ENCODE measurements at regions of chr3 and their contacts with region 1.

Region 1: GRCh38 chr3:45145681-45146614 is at the start of gene CDCP1:
- DNase-seq: peak; percentile 43 to 78
- H3K4me3 ChIP-seq: peak within 1 kb of the TSS; percentile 83
- H3K27ac ChIP-seq: peak within 1 kb of the TSS; percentile 85
- H3K4me1 ChIP-seq: peaks cover 34% of the 10 kb centered on the region
- H3K27me3 ChIP-seq: no peaks in the 10 kb centered on the region
- CTCF ChIP-seq: no peak
- total RNA-seq, gene CDCP1: 75.7 and 85.0 TPM in 2 replicates

Region 2: DNA sequence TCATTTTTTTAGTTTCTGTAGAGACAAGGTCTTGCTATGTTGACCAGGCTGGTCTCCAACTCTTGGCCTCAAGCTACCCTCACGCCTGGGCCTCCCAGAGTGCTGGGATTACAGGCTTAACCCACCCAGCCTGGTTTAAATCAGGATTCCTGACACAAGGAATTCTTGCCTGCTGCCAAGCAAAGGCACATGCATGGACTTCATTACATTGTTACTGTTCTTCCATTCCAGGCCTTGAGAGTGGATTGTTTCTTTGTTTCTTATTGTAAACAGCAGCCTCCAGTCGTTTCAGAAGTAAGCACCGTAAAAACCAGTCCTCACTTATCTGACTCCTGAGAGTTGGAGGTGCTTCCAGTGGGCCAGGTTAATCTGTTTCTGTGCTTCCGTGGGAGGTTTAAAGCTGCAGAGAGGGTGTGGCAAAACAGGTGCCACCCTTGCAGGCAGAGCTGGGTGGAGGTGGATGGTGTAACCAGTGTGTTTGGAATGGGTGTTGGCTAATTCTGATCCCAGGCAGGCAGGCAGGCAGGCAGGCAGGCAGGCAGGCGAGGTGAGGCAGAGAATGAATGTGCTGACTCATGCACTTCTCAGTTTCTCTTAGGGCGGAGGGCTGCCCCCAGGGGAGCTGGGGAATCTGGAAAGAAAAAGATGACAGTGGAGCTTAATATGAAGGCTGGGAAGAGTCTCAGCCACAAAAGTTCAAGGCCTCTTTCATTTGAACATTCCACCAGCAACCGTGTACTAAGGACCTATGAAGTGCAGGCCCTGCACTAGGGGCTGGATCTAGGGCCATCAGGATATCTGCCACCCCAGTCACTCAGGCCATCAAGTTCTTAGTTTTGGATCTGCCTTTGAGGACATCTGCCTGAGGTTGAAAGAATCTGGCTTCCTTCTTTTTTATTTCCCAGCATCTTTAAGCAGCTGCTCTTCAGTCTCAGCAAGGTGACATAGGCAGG is 37.2 kb after region 1 on chr3:
- CTCF ChIA-PET with region 1: no interaction called
- POLR2A ChIA-PET with region 1: interaction called, 10 read pairs
- intact Hi-C with region 1: loop called (anchors 1 kb)
- DNase-seq: peak; percentile 89 to 94
- H3K4me3 ChIP-seq: peak overlapping the region; percentile 34; the same call in 1 of the 2 replicates
- H3K27ac ChIP-seq: peak overlapping the region; percentile 98
- H3K4me1 ChIP-seq: peaks cover 40% of the 10 kb centered on the region
- H3K27me3 ChIP-seq: no peaks in the 10 kb centered on the region
- CTCF ChIP-seq: no peak

Region 3: DNA sequence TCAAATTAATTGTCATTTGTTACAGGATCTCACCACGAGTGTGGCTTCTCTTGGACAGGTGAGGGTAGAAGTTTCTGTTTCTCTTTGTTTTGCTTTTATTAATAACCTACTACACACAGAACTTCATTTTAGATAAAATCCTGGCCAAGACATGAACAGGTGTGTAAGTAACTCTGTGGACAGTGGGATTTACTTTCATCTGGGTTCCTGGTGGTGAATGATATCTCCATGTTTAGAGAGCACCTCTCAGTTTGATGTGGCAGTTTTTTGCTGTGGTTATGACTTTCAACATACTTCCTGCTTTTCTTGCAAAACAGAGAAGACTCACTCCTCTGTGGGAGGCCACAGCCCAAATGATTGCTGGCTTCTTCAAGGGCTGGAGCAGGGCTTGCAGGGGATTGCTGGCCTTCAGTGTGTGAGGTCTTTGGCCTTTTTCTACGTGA is 952.4 kb after region 1 on chr3:
- CTCF ChIA-PET with region 1: no interaction called
- POLR2A ChIA-PET with region 1: interaction called, 14 read pairs
- intact Hi-C with region 1: no loop called
- DNase-seq: peak in 1 of 2 experiments; percentile 85
- H3K4me3 ChIP-seq: no peak overlapping the region
- H3K27ac ChIP-seq: peak overlapping the region; percentile 85
- H3K4me1 ChIP-seq: peaks cover 45% of the 10 kb centered on the region
- H3K27me3 ChIP-seq: no peaks in the 10 kb centered on the region
- CTCF ChIP-seq: no peak